PC-3 (cell line): ENCODE measurements at regions of chr1 and their contacts with region 1.

Region 1: DNA sequence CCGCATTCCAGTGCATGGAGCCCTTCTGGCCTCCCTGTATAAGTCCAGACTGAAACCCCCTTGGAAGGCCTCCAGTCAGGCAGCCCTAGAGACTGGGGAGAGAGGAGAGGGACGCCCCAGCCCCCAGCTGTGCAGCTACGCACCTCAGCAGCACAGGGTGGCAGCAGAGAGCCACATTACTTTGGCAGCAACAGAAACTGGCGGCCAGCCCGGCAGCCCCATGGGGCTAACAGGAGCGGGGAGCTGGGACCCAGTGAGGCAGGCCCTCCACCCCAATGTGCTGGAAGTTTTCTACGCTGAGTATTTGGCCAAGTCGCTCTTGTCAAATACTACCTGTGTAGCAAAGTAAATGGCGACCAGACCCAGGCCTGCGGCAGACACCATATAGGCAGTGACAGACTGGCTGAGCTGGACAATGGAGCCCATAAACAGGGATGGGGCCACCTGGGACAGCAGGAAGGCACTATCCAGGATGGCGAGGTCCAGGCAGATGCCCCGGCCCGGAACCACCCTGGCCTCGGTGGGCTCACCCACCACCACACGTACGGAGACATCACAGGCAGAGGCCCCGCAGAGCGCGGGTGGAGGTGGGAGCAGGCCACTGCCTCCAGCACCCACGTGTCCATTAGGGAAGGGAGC is 21.2 kb downstream of the SLC45A3 start:
- DNase-seq: peak; percentile 85
- ATAC-seq: peak; percentile 75
- H3K4me3 ChIP-seq: no peak overlapping the region
- H3K27ac ChIP-seq: no peak overlapping the region
- H3K4me1 ChIP-seq: peaks cover 8% of the 10 kb centered on the region
- H3K27me3 ChIP-seq: no peaks in the 10 kb centered on the region
- CTCF ChIP-seq: peak; percentile 97

Region 2: GRCh38 chr1:205591522-205592351 is 67.3 kb before region 1 on chr1:
- CTCF ChIA-PET with region 1: interaction called, 38 read pairs
- POLR2A ChIA-PET with region 1: interaction called, 4 read pairs
- intact Hi-C with region 1: loop called (anchors 1 kb)
- DNase-seq: peak; percentile 91
- ATAC-seq: peak; percentile 84
- H3K4me3 ChIP-seq: peak overlapping the region; percentile 63
- H3K27ac ChIP-seq: no peak overlapping the region
- H3K4me1 ChIP-seq: peaks cover 3% of the 10 kb centered on the region; the same call in 1 of the 2 replicates
- H3K27me3 ChIP-seq: no peaks in the 10 kb centered on the region
- CTCF ChIP-seq: peak; percentile 98

Region 3: DNA sequence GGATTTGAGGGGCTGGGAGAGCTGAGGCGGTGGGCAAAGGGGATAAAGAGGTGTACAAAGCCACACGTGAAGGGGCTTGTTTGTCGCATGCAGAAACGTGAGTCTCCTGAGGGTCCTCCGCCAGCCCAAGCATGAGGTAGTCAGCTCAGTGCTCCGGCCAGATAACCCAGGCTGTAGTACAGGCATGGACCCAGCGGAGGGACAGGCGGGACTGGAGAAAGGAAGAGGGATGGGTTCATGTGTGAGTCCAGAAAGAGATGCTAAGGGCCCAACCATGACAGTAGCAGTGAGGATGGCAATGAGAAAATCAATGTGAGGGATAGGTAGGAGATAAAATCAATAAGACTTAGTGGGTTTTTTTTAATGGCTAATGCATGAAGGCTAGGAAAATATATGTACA is 13.5 kb before region 1 on chr1:
- CTCF ChIA-PET with region 1: no interaction called
- POLR2A ChIA-PET with region 1: no interaction called
- intact Hi-C with region 1: no loop called
- DNase-seq: no peak
- ATAC-seq: no peak
- H3K4me3 ChIP-seq: no peak overlapping the region
- H3K27ac ChIP-seq: no peak overlapping the region
- H3K4me1 ChIP-seq: no peaks in the 10 kb centered on the region
- H3K27me3 ChIP-seq: no peaks in the 10 kb centered on the region
- CTCF ChIP-seq: no peak

Region 4: GRCh38 chr1:205703072-205703471 is 44.0 kb after region 1 on chr1:
- CTCF ChIA-PET with region 1: interaction called, 11 read pairs
- POLR2A ChIA-PET with region 1: no interaction called
- intact Hi-C with region 1: no loop called
- DNase-seq: no peak
- ATAC-seq: peak; percentile 85
- H3K4me3 ChIP-seq: no peak overlapping the region
- H3K27ac ChIP-seq: no peak overlapping the region
- H3K4me1 ChIP-seq: peaks cover 11% of the 10 kb centered on the region
- H3K27me3 ChIP-seq: no peaks in the 10 kb centered on the region
- CTCF ChIP-seq: no peak

Region 5: DNA sequence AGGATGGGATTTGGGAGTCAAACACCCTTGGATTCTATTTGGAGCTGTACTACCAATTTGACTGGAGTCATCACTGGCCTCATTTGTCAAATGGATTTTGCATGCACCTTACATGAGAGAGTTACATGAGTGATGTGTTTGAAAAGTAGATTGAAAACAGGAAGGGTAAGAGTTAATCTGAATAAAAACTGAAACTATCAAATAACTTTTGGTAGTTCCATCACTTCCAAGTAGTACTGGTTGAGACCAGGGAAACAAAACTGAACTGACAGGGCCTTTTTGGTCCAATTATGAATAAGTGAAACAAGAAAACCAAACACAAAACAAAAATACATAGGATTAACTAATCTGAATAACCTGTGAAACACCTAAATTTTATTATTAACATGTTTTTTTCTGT is 60.7 kb after region 1 on chr1:
- CTCF ChIA-PET with region 1: interaction called, 17 read pairs
- POLR2A ChIA-PET with region 1: no interaction called
- intact Hi-C with region 1: no loop called
- DNase-seq: no peak
- ATAC-seq: no peak
- H3K4me3 ChIP-seq: no peak overlapping the region
- H3K27ac ChIP-seq: no peak overlapping the region
- H3K4me1 ChIP-seq: 0 out of 2 replicates have a peak, but pooled peaks cover 2% of the 10 kb centered on the region
- H3K27me3 ChIP-seq: no peaks in the 10 kb centered on the region
- CTCF ChIP-seq: no peak